Endothelial cell of umbilical vein (primary cell): ENCODE measurements at regions of chr17 and their contacts with region 1.

Region 1: GRCh38 chr17:17568749-17569195 is 22.7 kb downstream of the PEMT start:
- DNase-seq: peak; percentile 38
- H3K4me3 ChIP-seq: no peak overlapping the region
- H3K27ac ChIP-seq: no peak overlapping the region
- H3K4me1 ChIP-seq: no peaks in the 10 kb centered on the region
- H3K27me3 ChIP-seq: no peaks in the 10 kb centered on the region
- CTCF ChIP-seq: peak; percentile 85 to 89
- POLR2A ChIP-seq: no peak

Region 2: DNA sequence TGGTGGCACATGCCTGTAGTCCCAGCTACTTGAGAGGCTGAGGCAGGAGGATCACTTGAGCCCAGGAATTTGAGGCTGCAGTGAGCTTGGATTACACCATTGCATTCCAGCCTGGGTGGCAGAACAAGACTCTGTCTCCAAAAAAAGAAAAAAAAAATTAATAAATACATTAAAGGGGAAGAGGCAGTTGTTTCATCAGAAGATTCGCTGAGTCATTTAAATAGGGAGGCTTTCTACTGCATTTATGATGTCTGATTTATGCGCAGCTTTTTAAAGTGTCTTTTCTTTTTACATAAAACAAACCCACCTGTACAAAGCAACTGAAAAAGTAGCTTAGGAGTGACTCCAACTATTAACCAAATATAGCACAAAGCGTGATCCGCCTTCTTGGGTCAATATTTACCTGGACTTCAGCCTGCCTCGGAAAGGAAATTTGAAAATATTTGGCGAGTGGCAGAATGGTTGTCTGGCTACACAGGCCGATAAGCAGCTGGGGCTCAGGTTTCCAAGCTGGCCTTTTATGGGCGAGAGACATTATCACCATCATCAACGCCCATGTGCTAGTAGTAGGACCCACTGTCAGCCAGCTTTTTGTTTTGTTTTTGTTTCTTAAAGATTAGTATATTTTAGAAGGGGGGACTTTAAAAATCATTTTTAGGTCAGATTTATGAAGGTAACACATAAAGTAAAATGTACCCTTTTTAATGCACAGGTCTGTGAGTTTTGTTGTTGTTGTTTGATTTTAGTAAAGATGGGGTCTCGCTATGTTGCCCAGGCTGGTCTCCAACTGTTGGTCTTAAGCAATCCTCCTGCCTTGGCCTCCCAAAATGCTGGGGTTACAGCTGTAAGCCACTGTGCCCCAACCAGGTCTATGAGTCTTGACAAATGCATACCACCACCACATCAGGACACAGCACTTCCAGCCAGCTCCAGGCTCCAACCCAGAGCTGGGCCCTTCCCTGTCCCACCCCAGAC is 30.1 kb before region 1 on chr17:
- CTCF ChIA-PET with region 1: interaction called, 12 read pairs
- POLR2A ChIA-PET with region 1: no interaction called
- dilution Hi-C with region 1: no loop called
- intact Hi-C with region 1: no loop called
- DNase-seq: peak; percentile 17
- H3K4me3 ChIP-seq: no peak overlapping the region
- H3K27ac ChIP-seq: no peak overlapping the region
- H3K4me1 ChIP-seq: no peaks in the 10 kb centered on the region
- H3K27me3 ChIP-seq: no peaks in the 10 kb centered on the region
- CTCF ChIP-seq: no peak
- POLR2A ChIP-seq: no peak

Region 3: GRCh38 chr17:17591355-17592298 is 22.9 kb after region 1 on chr17 and contains the start of gene PEMT:
- CTCF ChIA-PET with region 1: interaction called, 12 read pairs
- POLR2A ChIA-PET with region 1: no interaction called
- dilution Hi-C with region 1: no loop called
- intact Hi-C with region 1: no loop called
- DNase-seq: peak; percentile 98
- H3K4me3 ChIP-seq: peak within 1 kb of the TSS; percentile 92 to 96 (median 95)
- H3K27ac ChIP-seq: peak within 1 kb of the TSS; percentile 67
- H3K4me1 ChIP-seq: peaks cover 9% of the 10 kb centered on the region
- H3K27me3 ChIP-seq: no peaks in the 10 kb centered on the region
- CTCF ChIP-seq: no peak
- POLR2A ChIP-seq: peak; percentile 84
- total RNA-seq, gene PEMT: 35.1 and 37.2 TPM in 2 replicates

Region 4: GRCh38 chr17:17605729-17606088 is 36.9 kb after region 1 on chr17:
- CTCF ChIA-PET with region 1: no interaction called
- POLR2A ChIA-PET with region 1: no interaction called
- dilution Hi-C with region 1: no loop called
- intact Hi-C with region 1: no loop called
- DNase-seq: no peak
- H3K4me3 ChIP-seq: no peak overlapping the region
- H3K27ac ChIP-seq: no peak overlapping the region
- H3K4me1 ChIP-seq: no peaks in the 10 kb centered on the region
- H3K27me3 ChIP-seq: peaks cover 0 to 2% of the 10 kb centered on the region in 2 experiments
- CTCF ChIP-seq: no peak
- POLR2A ChIP-seq: no peak

Region 5: GRCh38 chr17:17641621-17642409 is 73.0 kb after region 1 on chr17:
- CTCF ChIA-PET with region 1: interaction called, 8 read pairs
- POLR2A ChIA-PET with region 1: no interaction called
- dilution Hi-C with region 1: no loop called
- intact Hi-C with region 1: loop called (anchors 5 kb)
- DNase-seq: peak; percentile 74
- H3K4me3 ChIP-seq: no peak overlapping the region
- H3K27ac ChIP-seq: no peak overlapping the region
- H3K4me1 ChIP-seq: no peaks in the 10 kb centered on the region
- H3K27me3 ChIP-seq: no peaks in the 10 kb centered on the region
- CTCF ChIP-seq: peak; percentile 82 to 85
- POLR2A ChIP-seq: no peak